WTC11 (cell line): ENCODE measurements at regions of chr20 and their contacts with region 1.

Region 1: GRCh38 chr20:33862709-33863403 is 51.7 kb downstream of the CHMP4B start:
- DNase-seq: peak; percentile 79
- ATAC-seq: peak; percentile 83
- H3K4me3 Mint-ChIP-seq: peak overlapping the region; percentile 25; the same call in 1 of the 2 replicates
- H3K27ac Mint-ChIP-seq: no peak overlapping the region
- H3K4me1 Mint-ChIP-seq: peaks cover 12% of the 10 kb centered on the region
- H3K27me3 Mint-ChIP-seq: no peaks in the 10 kb centered on the region
- CTCF ChIP-seq: peak; percentile 84

Region 2: DNA sequence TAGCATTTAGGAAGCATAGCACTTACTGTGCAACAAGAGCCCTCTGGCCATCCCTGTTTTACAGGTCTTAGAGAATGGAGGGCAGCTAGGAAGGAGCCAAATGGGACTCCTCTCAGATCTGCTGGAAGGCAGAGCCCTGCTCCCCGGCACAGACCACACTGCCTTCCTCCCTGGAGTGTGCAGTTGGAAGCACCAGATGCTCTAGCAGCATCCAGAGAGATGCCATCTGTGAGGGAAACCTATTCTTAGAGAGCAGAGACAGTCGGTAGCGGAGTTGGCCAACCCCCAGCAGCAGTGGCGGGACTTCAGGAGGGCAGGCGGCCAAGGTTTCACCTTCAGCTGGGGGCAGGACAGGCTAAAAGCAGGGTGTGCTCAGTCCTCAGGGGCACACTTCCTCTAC is 160.0 kb before region 1 on chr20:
- CTCF ChIA-PET with region 1: no interaction called
- POLR2A ChIA-PET with region 1: no interaction called
- DNase-seq: no peak
- ATAC-seq: no peak
- H3K4me3 Mint-ChIP-seq: no peak overlapping the region
- H3K27ac Mint-ChIP-seq: no peak overlapping the region
- H3K4me1 Mint-ChIP-seq: no peaks in the 10 kb centered on the region
- H3K27me3 Mint-ChIP-seq: peaks cover 9% of the 10 kb centered on the region
- CTCF ChIP-seq: no peak

Region 3: GRCh38 chr20:33751775-33752174 is 111.1 kb before region 1 on chr20:
- CTCF ChIA-PET with region 1: no interaction called
- POLR2A ChIA-PET with region 1: no interaction called
- DNase-seq: no peak
- ATAC-seq: no peak
- H3K4me3 Mint-ChIP-seq: no peak overlapping the region
- H3K27ac Mint-ChIP-seq: no peak overlapping the region
- H3K4me1 Mint-ChIP-seq: peaks cover 7% of the 10 kb centered on the region
- H3K27me3 Mint-ChIP-seq: no peaks in the 10 kb centered on the region
- CTCF ChIP-seq: no peak

Region 4: GRCh38 chr20:33791959-33792597 is 70.8 kb before region 1 on chr20:
- CTCF ChIA-PET with region 1: interaction called, 31 read pairs
- POLR2A ChIA-PET with region 1: no interaction called
- DNase-seq: peak; percentile 75
- ATAC-seq: peak; percentile 86
- H3K4me3 Mint-ChIP-seq: no peak overlapping the region
- H3K27ac Mint-ChIP-seq: no peak overlapping the region
- H3K4me1 Mint-ChIP-seq: peaks cover 14% of the 10 kb centered on the region
- H3K27me3 Mint-ChIP-seq: no peaks in the 10 kb centered on the region
- CTCF ChIP-seq: peak; percentile 94

Region 5: GRCh38 chr20:33915726-33916331 is 53.0 kb after region 1 on chr20:
- CTCF ChIA-PET with region 1: interaction called, 30 read pairs
- POLR2A ChIA-PET with region 1: interaction called, 3 read pairs
- DNase-seq: peak; percentile 74
- ATAC-seq: peak; percentile 89
- H3K4me3 Mint-ChIP-seq: no peak overlapping the region
- H3K27ac Mint-ChIP-seq: no peak overlapping the region
- H3K4me1 Mint-ChIP-seq: peaks cover 14% of the 10 kb centered on the region
- H3K27me3 Mint-ChIP-seq: no peaks in the 10 kb centered on the region; the same call in 1 of the 2 replicates
- CTCF ChIP-seq: peak; percentile 80

Region 6: DNA sequence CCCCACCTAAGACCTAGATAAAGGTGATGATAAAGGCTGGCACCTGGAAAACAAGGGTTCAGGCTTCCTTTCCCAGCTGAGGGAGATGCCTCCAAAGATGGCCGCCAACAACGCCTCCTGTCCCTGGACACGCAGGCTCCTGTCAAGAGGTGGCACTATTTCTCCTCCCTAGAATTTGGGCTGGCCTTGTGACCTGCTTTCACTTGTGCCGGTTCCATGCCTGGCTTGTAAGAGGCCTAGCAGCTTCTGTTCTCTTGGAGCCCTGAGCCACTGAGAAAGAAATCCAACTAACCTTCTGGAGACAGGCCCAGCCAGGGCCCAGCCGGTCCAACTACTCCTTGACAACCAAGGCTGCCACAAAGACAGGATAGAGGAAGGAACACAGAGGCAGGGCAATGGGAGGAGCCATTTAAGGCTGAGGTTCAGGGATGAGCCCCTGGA is 70.6 kb after region 1 on chr20:
- CTCF ChIA-PET with region 1: interaction called, 26 read pairs
- POLR2A ChIA-PET with region 1: no interaction called
- DNase-seq: peak; percentile 71
- ATAC-seq: peak; percentile 97
- H3K4me3 Mint-ChIP-seq: no peak overlapping the region
- H3K27ac Mint-ChIP-seq: peak overlapping the region; percentile 76
- H3K4me1 Mint-ChIP-seq: no peaks in the 10 kb centered on the region
- H3K27me3 Mint-ChIP-seq: no peaks in the 10 kb centered on the region; the same call in 1 of the 2 replicates
- CTCF ChIP-seq: no peak

Region 7: GRCh38 chr20:34010405-34010931 is 147.6 kb after region 1 on chr20:
- CTCF ChIA-PET with region 1: interaction called, 10 read pairs
- POLR2A ChIA-PET with region 1: no interaction called
- DNase-seq: no peak
- ATAC-seq: peak; percentile 89
- H3K4me3 Mint-ChIP-seq: peak overlapping the region; percentile 31; the same call in 1 of the 2 replicates
- H3K27ac Mint-ChIP-seq: peak overlapping the region; percentile 92
- H3K4me1 Mint-ChIP-seq: peaks cover 79% of the 10 kb centered on the region
- H3K27me3 Mint-ChIP-seq: no peaks in the 10 kb centered on the region
- CTCF ChIP-seq: no peak

Region 8: GRCh38 chr20:34062570-34063482 is 200.0 kb after region 1 on chr20:
- CTCF ChIA-PET with region 1: interaction called, 70 read pairs
- POLR2A ChIA-PET with region 1: no interaction called
- DNase-seq: no peak
- ATAC-seq: no peak
- H3K4me3 Mint-ChIP-seq: no peak overlapping the region
- H3K27ac Mint-ChIP-seq: no peak overlapping the region
- H3K4me1 Mint-ChIP-seq: peaks cover 21% of the 10 kb centered on the region
- H3K27me3 Mint-ChIP-seq: no peaks in the 10 kb centered on the region
- CTCF ChIP-seq: no peak

Region 9: DNA sequence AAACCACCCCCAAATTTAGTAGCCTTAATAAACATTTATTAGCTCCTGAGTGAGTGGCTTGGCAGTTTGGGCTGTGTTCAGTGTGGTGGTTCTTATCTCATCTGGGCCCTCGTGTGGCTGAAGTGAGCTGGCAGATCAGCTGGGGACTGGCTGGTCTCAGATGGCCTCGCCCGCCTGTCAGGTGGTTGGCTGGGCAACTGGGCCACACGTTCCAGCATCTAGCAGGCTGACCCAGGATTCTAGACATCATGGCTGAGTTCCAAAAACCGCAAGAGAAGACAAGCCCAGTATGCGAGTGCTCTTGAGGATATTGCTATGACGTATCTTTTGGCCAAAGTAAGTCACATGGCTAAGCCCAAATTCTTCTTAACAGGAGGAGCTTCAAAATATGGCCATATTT is 220.3 kb after region 1 on chr20:
- CTCF ChIA-PET with region 1: interaction called, 10 read pairs
- POLR2A ChIA-PET with region 1: no interaction called
- DNase-seq: no peak
- ATAC-seq: no peak
- H3K4me3 Mint-ChIP-seq: no peak overlapping the region
- H3K27ac Mint-ChIP-seq: no peak overlapping the region
- H3K4me1 Mint-ChIP-seq: no peaks in the 10 kb centered on the region
- H3K27me3 Mint-ChIP-seq: no peaks in the 10 kb centered on the region
- CTCF ChIP-seq: no peak